OCI-LY7 (cell line): ENCODE measurements at regions of chr4 and their contacts with region 1.

Region 1: GRCh38 chr4:181536811-181537434 is 706.3 kb upstream of the TENM3 start:
- DNase-seq: no peak
- H3K4me3 ChIP-seq: no peak overlapping the region
- H3K27ac ChIP-seq: no peak overlapping the region
- H3K4me1 ChIP-seq: no peaks in the 10 kb centered on the region
- CTCF ChIP-seq: no peak

Region 2: GRCh38 chr4:181468451-181468850 is 68.5 kb before region 1 on chr4:
- CTCF ChIA-PET with region 1: no interaction called
- POLR2A ChIA-PET with region 1: no interaction called
- intact Hi-C with region 1: no loop called
- DNase-seq: no peak
- H3K4me3 ChIP-seq: no peak overlapping the region
- H3K27ac ChIP-seq: no peak overlapping the region
- H3K4me1 ChIP-seq: no peaks in the 10 kb centered on the region
- CTCF ChIP-seq: no peak

Region 3: DNA sequence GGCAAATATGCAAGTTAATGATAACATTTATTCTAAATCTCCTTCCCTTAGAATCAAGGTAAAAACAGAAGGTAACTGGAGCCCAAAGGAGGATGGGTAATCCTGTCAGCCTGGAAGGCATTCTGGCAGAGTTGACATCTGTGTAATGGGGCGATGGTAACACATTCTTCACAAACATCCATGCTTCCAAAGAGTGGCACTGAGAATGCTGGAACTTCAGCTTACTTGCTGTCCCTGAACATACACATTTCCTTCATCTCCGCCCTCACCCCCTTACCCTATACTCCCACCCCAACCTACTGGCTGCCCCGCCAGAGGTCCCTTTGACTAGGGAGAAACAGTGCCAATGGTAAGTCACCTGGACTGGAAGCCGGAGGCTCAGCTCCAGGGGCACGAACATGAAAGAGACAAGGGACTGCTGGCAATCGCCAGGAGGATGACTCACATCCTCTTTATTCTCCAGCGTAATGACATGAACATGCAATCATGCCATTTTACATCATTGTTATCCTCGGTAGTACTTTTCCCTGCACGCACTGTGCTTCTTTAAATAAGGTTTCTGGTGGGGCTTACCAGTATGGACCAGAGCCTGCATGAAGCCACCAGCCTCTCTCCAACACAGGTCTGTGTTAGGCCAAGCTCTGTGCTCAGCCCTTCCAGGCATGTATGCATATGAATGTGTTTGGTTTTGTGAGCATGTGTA is 12.1 kb after region 1 on chr4:
- CTCF ChIA-PET with region 1: no interaction called
- POLR2A ChIA-PET with region 1: interaction called, 11 read pairs
- intact Hi-C with region 1: no loop called
- DNase-seq: no peak
- H3K4me3 ChIP-seq: no peak overlapping the region
- H3K27ac ChIP-seq: no peak overlapping the region
- H3K4me1 ChIP-seq: no peaks in the 10 kb centered on the region
- CTCF ChIP-seq: no peak